HCT116 (cell line): ENCODE measurements at regions of chr4 and their contacts with region 1.

Region 1: DNA sequence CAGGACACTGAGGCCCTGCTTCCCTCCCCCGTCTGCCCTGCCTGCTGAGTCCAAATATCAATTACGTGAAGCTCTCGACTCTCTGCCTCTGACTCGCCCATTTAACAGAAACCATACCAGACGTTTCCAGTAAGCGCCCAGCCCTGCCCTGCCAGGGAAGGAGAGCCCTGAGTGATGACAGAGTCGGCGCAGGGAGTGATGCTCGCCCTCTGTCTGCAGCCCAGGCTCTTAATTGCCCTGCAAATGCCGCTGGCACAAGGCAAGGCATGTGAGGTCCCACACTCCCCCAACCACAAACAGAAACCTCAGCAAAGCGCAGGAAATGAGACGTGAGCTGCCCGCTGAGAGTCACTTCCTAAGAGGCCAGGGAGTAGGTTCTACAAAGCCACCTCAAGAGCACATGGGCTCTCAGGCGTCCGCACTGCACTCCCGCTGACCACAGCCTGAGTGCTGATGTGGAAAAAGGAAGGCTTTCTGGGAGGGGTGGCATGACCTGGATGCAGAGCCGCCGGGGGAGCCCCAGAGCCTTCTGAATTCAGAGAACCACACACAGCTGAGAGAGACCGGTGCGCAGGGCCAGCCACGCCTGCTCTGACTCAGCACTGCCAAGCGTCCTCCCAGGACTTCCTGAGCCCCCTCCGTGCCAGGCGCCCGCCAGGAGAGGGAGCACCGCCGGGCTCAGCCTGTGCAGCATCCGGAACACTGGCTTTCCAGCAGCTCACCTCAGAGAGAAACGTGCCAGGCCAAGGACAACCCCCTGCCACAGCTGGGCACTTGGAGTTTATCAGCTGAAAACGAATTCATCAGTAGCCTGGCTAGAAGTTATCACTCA is 5.3 kb downstream of the ZFYVE28 start:
- DNase-seq: peak; percentile 88
- ATAC-seq: peak; percentile 84
- H3K4me3 ChIP-seq: peak overlapping the region; percentile 47 to 58
- H3K27ac ChIP-seq: peak overlapping the region; percentile 91
- H3K4me1 ChIP-seq: peaks cover 32 to 81% of the 10 kb centered on the region in 2 experiments
- H3K27me3 ChIP-seq: no peaks in the 10 kb centered on the region
- CTCF ChIP-seq: peak in 2 of 3 experiments; percentile 49 to 71; a peak in 3 of 6 replicates
- POLR2A ChIP-seq: no peak
- RAD21 ChIP-seq: no peak

Region 2: DNA sequence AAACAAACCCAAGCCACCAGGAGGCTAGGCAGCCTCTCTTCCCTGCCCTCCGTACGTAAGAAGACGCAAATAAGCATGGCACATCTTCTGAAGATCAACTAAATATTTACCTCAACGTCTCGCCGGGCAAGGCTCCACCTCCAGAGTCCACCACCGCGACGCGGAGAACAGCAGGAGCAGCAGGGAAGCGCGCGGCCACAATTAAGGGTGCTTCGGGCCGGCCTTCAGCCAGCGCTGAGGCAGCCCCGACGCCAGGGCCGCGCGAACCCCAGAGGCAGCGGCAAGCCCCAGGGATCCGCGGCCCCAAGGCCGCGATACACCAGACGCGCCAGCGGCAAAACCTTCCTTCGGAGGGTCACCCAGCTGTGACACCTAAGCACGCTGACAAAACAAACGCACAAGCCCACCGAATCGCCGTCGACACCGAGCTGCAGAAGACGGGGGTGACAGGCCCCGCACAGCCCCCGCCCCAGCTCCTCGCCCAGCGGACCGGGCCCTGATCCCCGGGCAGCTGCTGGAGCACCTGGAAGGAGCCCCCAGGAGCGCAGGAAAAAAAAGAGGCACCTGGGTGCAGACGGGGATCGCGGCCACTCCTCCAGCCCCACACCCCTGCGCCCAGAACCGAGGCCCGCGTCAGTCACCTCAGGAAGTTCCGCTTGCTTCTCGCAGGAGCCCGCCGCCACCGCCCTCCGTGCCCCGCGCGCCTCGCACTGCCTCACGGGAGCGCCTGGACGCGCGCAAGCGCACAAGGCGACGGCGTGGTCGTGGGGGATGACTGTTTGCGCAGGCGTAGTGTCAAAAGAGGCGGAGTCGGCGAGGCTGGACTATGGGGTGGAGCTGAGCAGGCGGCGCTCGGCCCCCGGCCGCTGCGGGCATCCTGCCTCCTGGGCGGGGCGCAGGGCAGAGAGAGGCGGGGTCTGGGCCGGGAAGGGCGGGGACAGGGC is 171.4 kb before region 1 on chr4 and contains the starts of genes HAUS3 and POLN:
- CTCF ChIA-PET with region 1: no interaction called
- POLR2A ChIA-PET with region 1: interaction called, 3 read pairs
- RAD21 ChIA-PET with region 1: no interaction called
- intact Hi-C with region 1: loop called (anchors 5 kb)
- DNase-seq: peak; percentile 95
- ATAC-seq: peak; percentile 97
- H3K4me3 ChIP-seq: peak within 1 kb of the TSS; percentile 94 to 97
- H3K27ac ChIP-seq: peak within 1 kb of the TSS; percentile 72
- H3K4me1 ChIP-seq: peaks cover 7 to 27% of the 10 kb centered on the region in 2 experiments; a peak in 3 of 4 replicates
- H3K27me3 ChIP-seq: no peaks in the 10 kb centered on the region
- CTCF ChIP-seq: no peak
- POLR2A ChIP-seq: peak; percentile 71
- RAD21 ChIP-seq: 0 out of 2 replicates have a peak, but pooled peaks have one; percentile 8
- total RNA-seq, gene HAUS3: 17.3 TPM
- total RNA-seq, gene POLN: 3.1 TPM

Region 3: GRCh38 chr4:2484993-2485392 is 71.9 kb after region 1 on chr4:
- CTCF ChIA-PET with region 1: no interaction called
- POLR2A ChIA-PET with region 1: no interaction called
- RAD21 ChIA-PET with region 1: no interaction called
- intact Hi-C with region 1: no loop called
- DNase-seq: no peak
- ATAC-seq: no peak
- H3K4me3 ChIP-seq: no peak overlapping the region
- H3K27ac ChIP-seq: no peak overlapping the region
- H3K4me1 ChIP-seq: no peaks in the 10 kb centered on the region
- H3K27me3 ChIP-seq: no peaks in the 10 kb centered on the region
- CTCF ChIP-seq: no peak
- POLR2A ChIP-seq: no peak
- RAD21 ChIP-seq: no peak